Naive thymus-derived CD4-positive, alpha-beta T cell (primary cell): ENCODE measurements at regions of chr17 and their contacts with region 1.

Region 1: DNA sequence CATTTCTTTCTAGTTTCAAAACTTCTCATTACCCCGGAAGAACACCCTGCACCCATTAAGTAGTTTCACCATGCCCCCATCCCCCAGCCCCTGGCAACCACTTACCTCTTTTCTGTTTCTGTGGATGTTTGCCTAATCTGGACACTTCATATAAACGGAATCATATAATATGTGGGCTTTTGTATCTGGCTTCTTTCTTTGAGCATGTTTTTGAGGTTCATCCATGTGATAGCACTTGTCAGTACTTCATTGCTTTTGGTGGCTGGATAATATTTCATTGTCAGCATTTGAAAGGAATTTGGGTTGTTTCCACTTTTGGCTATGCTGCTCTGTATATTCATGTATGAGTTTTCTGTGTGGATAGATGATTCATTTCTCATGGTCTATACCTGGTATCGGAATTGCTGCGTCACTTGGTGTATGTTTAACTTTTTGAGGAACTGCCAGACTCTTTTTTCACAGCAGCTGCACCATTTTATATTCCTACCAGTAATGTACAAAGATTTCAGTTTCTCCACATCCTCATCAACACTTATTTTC is 30.0 kb upstream of the SLC5A10 start:
- DNase-seq: no peak
- ATAC-seq: no peak
- H3K4me3 ChIP-seq: no peak overlapping the region
- H3K4me3 Mint-ChIP-seq: peak overlapping the region in 8 of 10 donors; percentile 13 to 63 (median 50)
- H3K27ac ChIP-seq: no peak overlapping the region
- H3K27ac Mint-ChIP-seq: peak overlapping the region; percentile 20 to 70 (median 60)
- H3K4me1 ChIP-seq: peaks cover 9 to 58% of the 10 kb centered on the region in 2 donors
- H3K4me1 Mint-ChIP-seq: peaks cover 34 to 90% (median 74%) of the 10 kb centered on the region in 7 donors
- H3K27me3 ChIP-seq: no peaks in the 10 kb centered on the region
- H3K27me3 Mint-ChIP-seq: no peaks in the 10 kb centered on the region

Region 2: GRCh38 chr17:18933102-18934058 is 11.4 kb after region 1 on chr17:
- CTCF ChIA-PET with region 1: no interaction called
- POLR2A ChIA-PET with region 1: interaction called, 3 read pairs
- intact Hi-C with region 1: loop called in 1 of 2 experiments (anchors 1 kb)
- DNase-seq: no peak
- ATAC-seq: peak; percentile 48
- H3K4me3 ChIP-seq: no peak overlapping the region
- H3K4me3 Mint-ChIP-seq: peak overlapping the region in 4 of 10 donors; percentile 11 to 42 (median 30)
- H3K27ac ChIP-seq: no peak overlapping the region
- H3K27ac Mint-ChIP-seq: peak overlapping the region in 4 of 9 donors; percentile 14 to 87 (median 79)
- H3K4me1 ChIP-seq: peaks cover 0 to 19% of the 10 kb centered on the region in 2 donors
- H3K4me1 Mint-ChIP-seq: peaks cover 13 to 37% (median 22%) of the 10 kb centered on the region in 7 donors
- H3K27me3 ChIP-seq: no peaks in the 10 kb centered on the region
- H3K27me3 Mint-ChIP-seq: peaks cover 0 to 10% (median 0%) of the 10 kb centered on the region in 5 donors

Region 3: GRCh38 chr17:19470532-19471261 is 548.7 kb after region 1 on chr17:
- CTCF ChIA-PET with region 1: no interaction called
- POLR2A ChIA-PET with region 1: no interaction called
- intact Hi-C with region 1: no loop called
- DNase-seq: no peak
- ATAC-seq: no peak
- H3K4me3 ChIP-seq: no peak overlapping the region
- H3K4me3 Mint-ChIP-seq: no peak overlapping the region
- H3K27ac ChIP-seq: no peak overlapping the region
- H3K27ac Mint-ChIP-seq: no peak overlapping the region
- H3K4me1 ChIP-seq: peaks cover 0 to 2% of the 10 kb centered on the region in 2 donors
- H3K4me1 Mint-ChIP-seq: peaks cover 0 to 5% (median 0%) of the 10 kb centered on the region in 7 donors
- H3K27me3 ChIP-seq: no peaks in the 10 kb centered on the region
- H3K27me3 Mint-ChIP-seq: no peaks in the 10 kb centered on the region